ENCODE measurements at regions of chr3 and their contacts with region 1.

Region 1: GRCh38 chr3:48439820-48440589 is at the starts of genes CCDC51 and TMA7:
- DNase-seq: peak; percentile 98
- ATAC-seq: peak; percentile 96 to 97
- H3K4me3 ChIP-seq: peak within 1 kb of the TSS; percentile 74 to 95 (median 92)
- H3K27ac ChIP-seq: peak within 1 kb of the TSS; percentile 85 to 96 (median 94)
- H3K4me1 ChIP-seq: peaks cover 21 to 24% of the 10 kb centered on the region in 2 donors
- H3K27me3 ChIP-seq: no peaks in the 10 kb centered on the region
- CTCF ChIP-seq: no peak
- POLR2A ChIP-seq: peak; percentile 84 to 95
- total RNA-seq, gene CCDC51: 4.9 to 12.2 (median 9.9) TPM
- total RNA-seq, gene TMA7: 202 to 353 (median 294) TPM

Region 2: DNA sequence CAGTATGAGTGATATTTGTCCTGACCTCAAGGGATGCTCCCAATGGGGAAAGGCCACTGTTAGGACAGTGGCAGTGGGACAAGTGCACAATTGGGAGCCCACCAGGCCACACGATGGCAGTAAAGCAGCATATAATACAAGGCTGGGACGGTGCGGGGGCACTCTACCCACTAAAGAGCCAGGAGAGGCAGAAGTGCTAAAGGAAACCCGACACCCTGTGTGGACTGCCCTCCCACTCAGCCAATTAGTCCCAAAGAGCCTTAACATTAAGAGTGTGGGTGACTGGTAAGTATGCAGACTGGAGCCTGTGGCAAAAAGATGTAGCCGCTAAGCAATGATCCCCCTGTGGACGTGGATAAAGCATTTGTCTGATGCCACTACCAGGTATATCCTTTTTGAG is 207.3 kb before region 1 on chr3:
- in situ Hi-C with region 1: no loop called
- intact Hi-C with region 1: loop called (anchors 5 kb)
- DNase-seq: peak; percentile 28 to 58
- ATAC-seq: peak; percentile 50 to 65
- H3K4me3 ChIP-seq: no peak overlapping the region
- H3K27ac ChIP-seq: peak overlapping the region in 2 of 4 donors; percentile 42 to 43
- H3K4me1 ChIP-seq: peaks cover 4 to 16% of the 10 kb centered on the region in 2 donors
- H3K27me3 ChIP-seq: no peaks in the 10 kb centered on the region
- CTCF ChIP-seq: peak in 3 of 5 experiments; percentile 40 to 52 (median 46)
- POLR2A ChIP-seq: no peak

Region 3: DNA sequence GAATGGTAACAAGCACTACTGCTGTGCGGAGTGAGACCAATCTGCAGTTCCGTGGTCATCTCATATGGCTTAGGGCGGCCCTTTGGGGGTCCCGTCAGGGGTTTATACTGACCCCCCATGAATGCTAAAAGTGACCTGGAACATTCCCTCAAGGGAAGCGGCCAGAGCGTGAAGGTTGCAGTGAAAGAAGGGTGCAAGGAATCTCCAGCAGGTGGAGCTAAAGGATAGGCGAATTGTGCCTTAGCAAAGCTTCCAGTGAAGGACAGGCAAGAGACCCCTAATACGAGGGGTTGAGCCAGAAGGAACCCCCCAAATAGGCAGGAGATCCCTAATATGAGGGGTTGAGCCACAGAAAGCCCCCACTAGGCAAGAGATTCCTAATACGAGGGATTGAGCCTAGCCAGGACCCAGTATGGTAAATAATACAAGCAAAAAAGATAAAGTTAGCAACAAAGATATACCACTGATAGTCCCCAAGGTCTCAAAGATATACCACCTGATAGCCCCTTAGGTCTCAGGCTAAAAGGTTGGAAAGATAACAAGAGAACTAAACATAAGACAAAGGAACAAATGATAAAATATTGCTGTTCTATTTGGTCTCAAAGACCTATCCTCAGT is 166.3 kb before region 1 on chr3:
- in situ Hi-C with region 1: loop called (anchors 5 to 10 kb)
- intact Hi-C with region 1: loop called (anchors 1 kb)
- DNase-seq: peak; percentile 5 to 34
- ATAC-seq: peak in 1 of 2 donors; percentile 66
- H3K4me3 ChIP-seq: no peak overlapping the region
- H3K27ac ChIP-seq: no peak overlapping the region
- H3K4me1 ChIP-seq: no peaks in the 10 kb centered on the region
- H3K27me3 ChIP-seq: no peaks in the 10 kb centered on the region
- CTCF ChIP-seq: peak; percentile 55 to 80 (median 67)
- POLR2A ChIP-seq: no peak

Region 4: DNA sequence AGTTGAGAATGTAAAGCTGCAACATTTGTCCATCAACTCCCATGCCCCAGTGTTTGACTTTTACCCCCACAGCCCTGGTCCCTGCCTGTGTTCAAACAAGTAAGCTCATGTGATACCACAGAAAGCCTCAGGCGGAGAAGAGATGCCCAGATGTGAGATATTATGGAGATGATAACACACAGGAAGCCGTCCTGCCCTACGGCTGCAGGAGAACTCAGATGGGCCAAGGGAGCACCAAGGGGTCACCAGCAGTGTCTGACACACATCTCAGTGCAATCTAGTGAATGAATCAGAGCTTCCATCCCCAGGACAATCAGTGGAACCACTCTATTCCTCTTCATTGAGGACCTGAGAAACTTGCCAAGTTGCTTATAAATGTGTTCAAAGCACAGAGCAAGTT is 92.5 kb before region 1 on chr3:
- in situ Hi-C with region 1: no loop called
- intact Hi-C with region 1: no loop called
- DNase-seq: no peak
- ATAC-seq: no peak
- H3K4me3 ChIP-seq: no peak overlapping the region
- H3K27ac ChIP-seq: no peak overlapping the region
- H3K4me1 ChIP-seq: no peaks in the 10 kb centered on the region
- H3K27me3 ChIP-seq: no peaks in the 10 kb centered on the region
- CTCF ChIP-seq: no peak
- POLR2A ChIP-seq: no peak

Region 5: DNA sequence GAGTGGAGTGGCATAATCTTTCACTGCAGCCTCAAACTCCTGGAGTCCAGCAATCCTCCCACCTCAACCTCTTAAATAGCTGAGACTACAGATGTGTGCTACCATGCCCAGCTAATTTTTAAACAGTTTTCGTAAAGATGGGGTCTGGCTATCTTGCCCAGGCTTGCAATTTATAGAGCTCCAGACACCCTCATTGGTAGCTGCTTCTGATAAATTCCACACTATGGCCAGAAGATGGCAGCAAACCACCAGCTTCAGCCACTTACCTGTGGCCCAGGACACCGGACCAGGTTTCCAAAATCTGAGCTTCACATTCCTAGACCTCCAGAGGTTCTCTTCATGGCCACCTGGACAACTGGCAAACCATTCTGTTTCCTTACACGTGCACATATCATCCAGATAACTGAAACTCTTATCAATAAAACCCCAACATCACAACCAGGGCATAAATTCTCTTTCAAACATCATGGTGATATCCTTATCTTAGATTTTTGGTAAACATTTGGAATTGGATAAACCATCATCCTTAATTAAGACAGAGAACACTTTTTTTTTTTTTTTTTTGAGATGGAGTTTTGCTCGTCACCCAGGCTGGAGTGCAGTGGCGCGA is 39.1 kb before region 1 on chr3:
- in situ Hi-C with region 1: loop called in 3 of 4 experiments (anchors 5 kb)
- intact Hi-C with region 1: loop called (anchors 1 kb)
- DNase-seq: peak in 1 of 2 donors; percentile 47
- ATAC-seq: peak; percentile 48 to 69
- H3K4me3 ChIP-seq: no peak overlapping the region
- H3K27ac ChIP-seq: no peak overlapping the region
- H3K4me1 ChIP-seq: peaks cover 0 to 5% of the 10 kb centered on the region in 2 donors
- H3K27me3 ChIP-seq: no peaks in the 10 kb centered on the region
- CTCF ChIP-seq: peak; percentile 79 to 90 (median 84)
- POLR2A ChIP-seq: no peak

Region 6: GRCh38 chr3:48811524-48811923 is 371.5 kb after region 1 on chr3:
- in situ Hi-C with region 1: no loop called
- intact Hi-C with region 1: no loop called
- DNase-seq: no peak
- ATAC-seq: no peak
- H3K4me3 ChIP-seq: no peak overlapping the region
- H3K27ac ChIP-seq: no peak overlapping the region
- H3K4me1 ChIP-seq: peaks cover 5 to 9% of the 10 kb centered on the region in 2 donors
- H3K27me3 ChIP-seq: no peaks in the 10 kb centered on the region
- CTCF ChIP-seq: no peak
- POLR2A ChIP-seq: no peak

Measured in gastrocnemius medialis (tissue), 4 donors.